Activated naive CD4-positive, alpha-beta T cell treated with anti-CD3 and anti-CD28 coated beads, Interleukin-2, amount 10 ng/mL, durations not matched to agents 7 days and 5 days (primary cell): ENCODE measurements at regions of chr19 and their contacts with region 1.

Region 1: DNA sequence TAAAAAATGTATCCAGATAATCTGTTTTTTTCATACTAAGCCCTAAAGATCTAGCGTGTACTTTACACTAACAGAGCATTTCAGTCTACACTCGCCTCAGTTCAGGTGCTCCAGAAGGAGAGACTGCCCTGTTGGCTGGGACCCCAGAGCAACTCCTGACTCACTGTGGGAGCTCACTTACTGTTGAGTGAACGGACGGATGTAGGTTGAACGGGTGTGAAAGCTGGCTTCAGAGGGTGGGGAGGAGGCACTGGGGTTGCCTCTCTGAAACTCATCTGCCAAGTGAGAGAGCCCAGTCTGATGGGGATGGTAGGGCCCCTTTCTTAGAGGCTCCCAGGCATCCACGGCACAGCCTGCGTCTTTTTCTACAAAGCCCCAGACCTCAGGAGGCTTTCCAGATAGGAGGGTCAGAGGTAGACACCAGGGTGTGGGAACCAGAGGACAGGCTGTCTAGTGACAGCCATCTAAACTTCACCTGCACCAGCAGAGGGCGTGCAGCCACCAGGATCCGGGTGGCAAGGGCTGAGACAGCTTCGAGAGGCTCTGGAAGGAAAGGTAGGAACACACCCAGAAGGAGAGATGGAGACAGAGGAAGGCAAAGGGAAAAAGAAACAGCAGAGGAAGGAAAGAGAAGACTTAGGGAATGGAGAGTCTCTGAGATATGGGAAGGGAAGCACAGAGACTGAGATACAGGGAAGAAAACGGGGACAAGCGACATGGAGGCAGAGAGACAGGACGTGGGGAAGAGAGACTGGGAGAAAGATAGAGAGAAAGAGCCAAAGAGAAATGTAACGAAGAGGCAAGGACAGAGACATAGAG is 3.7 kb downstream of the KASH5 start:
- DNase-seq: peak; percentile 87
- H3K4me3 Mint-ChIP-seq: no peak overlapping the region
- H3K27ac Mint-ChIP-seq: peak overlapping the region; percentile 34
- H3K4me1 Mint-ChIP-seq: peaks cover 32% of the 10 kb centered on the region
- H3K27me3 Mint-ChIP-seq: peaks cover 74% of the 10 kb centered on the region

Region 2: GRCh38 chr19:49430678-49431329 is 39.0 kb after region 1 on chr19:
- CTCF ChIA-PET with region 1: interaction called, 10 read pairs
- DNase-seq: peak; percentile 57
- H3K4me3 Mint-ChIP-seq: no peak overlapping the region
- H3K27ac Mint-ChIP-seq: peak overlapping the region; percentile 25
- H3K4me1 Mint-ChIP-seq: peaks cover 54% of the 10 kb centered on the region
- H3K27me3 Mint-ChIP-seq: peaks cover 100% of the 10 kb centered on the region

Region 3: GRCh38 chr19:49443366-49444099 is 51.7 kb after region 1 on chr19:
- CTCF ChIA-PET with region 1: interaction called, 13 read pairs
- DNase-seq: peak; percentile 95
- H3K4me3 Mint-ChIP-seq: peak overlapping the region; percentile 81
- H3K27ac Mint-ChIP-seq: peak overlapping the region; percentile 81
- H3K4me1 Mint-ChIP-seq: peaks cover 64% of the 10 kb centered on the region
- H3K27me3 Mint-ChIP-seq: peaks cover 55% of the 10 kb centered on the region

Region 4: DNA sequence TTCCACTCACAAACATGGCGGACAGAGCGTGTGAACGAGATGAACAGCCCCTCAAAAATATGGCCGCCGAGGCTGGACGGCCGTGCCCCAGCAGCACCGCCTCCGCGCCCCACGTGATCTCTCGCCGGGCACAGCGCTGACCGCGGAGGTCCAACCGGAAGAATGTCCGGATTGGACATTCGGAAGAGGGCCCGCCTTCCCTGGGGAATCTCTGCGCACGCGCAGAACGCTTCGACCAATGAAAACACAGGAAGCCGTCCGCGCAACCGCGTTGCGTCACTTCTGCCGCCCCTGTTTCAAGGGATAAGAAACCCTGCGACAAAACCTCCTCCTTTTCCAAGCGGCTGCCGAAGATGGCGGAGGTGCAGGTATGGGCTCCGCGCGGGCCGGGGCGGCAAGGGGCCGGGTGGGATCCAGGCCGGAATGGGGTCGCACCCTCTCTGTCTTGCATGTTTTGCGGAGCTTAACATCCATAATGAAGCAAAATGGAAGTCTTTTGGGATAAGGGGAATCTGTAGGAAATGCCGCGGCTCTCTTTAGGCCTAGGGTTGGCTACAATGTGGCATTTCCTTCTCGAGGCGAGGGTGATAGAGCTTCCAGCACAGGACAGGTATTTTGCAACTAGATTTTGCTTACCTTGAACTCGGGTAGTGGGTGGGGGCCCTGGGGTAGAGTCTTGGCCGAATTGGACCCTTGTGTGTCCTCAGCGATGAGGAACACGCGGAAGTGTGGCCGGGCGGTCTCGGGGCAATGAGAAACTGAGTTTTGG is 95.7 kb after region 1 on chr19 and contains the start of gene RPL13A:
- CTCF ChIA-PET with region 1: no interaction called
- DNase-seq: peak; percentile 100
- H3K4me3 Mint-ChIP-seq: peak within 1 kb of the TSS; percentile 100
- H3K27ac Mint-ChIP-seq: peak within 1 kb of the TSS; percentile 97
- H3K4me1 Mint-ChIP-seq: peaks cover 54% of the 10 kb centered on the region
- H3K27me3 Mint-ChIP-seq: peaks cover 8% of the 10 kb centered on the region